GM12878 (cell line): ENCODE measurements at regions of chr14 and their contacts with region 1.

Region 1: GRCh38 chr14:47917345-47917954 is 242.0 kb upstream of the MDGA2 start:
- DNase-seq: no peak
- ATAC-seq: no peak
- H3K4me3 ChIP-seq: no peak overlapping the region
- H3K27ac ChIP-seq: no peak overlapping the region
- H3K4me1 ChIP-seq: no peaks in the 10 kb centered on the region
- H3K27me3 ChIP-seq: no peaks in the 10 kb centered on the region
- CTCF ChIP-seq: peak; percentile 44 to 55 (median 48); a peak in 5 of 6 replicates
- EP300 ChIP-seq: no peak
- POLR2A ChIP-seq: no peak
- RAD21 ChIP-seq: peak; percentile 65

Region 2: GRCh38 chr14:47929334-47929733 is 11.9 kb after region 1 on chr14:
- CTCF ChIA-PET with region 1: interaction called, 26 read pairs
- POLR2A ChIA-PET with region 1: no interaction called
- RAD21 ChIA-PET with region 1: interaction called, 10 read pairs
- SMC1A ChIA-PET with region 1: interaction called, 5 read pairs
- in situ Hi-C with region 1: no loop called
- intact Hi-C with region 1: no loop called
- DNase-seq: peak; percentile 36
- ATAC-seq: peak; percentile 83
- H3K4me3 ChIP-seq: no peak overlapping the region
- H3K27ac ChIP-seq: no peak overlapping the region
- H3K4me1 ChIP-seq: no peaks in the 10 kb centered on the region
- H3K27me3 ChIP-seq: no peaks in the 10 kb centered on the region
- CTCF ChIP-seq: no peak
- EP300 ChIP-seq: peak; percentile 68 to 82; a peak in 3 of 4 replicates
- POLR2A ChIP-seq: no peak
- RAD21 ChIP-seq: no peak

Region 3: DNA sequence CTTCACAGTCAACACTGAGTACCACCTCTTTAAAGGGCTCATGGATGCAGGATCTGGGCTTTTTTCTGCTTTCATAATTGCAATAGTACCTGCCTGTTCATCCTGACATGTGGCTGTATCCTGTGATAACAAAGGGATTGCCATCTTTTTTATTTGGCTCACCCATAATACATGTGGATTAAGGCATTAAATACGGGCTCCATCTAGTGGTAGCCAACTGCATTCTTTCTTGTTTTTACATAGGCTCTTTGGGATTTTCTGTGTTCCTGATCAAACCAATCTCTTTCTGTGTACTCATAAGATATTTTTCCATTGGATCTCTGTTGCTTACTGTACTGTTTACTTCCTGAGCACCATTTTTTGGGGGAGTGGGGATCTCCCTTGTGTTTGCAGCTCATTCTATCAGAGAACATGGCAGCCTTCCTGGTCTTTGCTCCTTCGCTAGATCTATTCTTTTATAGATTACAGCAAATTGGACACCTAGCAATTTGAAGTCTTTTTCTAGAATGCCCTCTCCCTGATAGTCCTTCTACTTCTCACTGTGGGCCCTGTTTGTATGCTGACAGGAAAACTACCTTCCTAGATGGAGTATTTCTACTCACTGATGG is 481.3 kb after region 1 on chr14:
- CTCF ChIA-PET with region 1: interaction called, 15 read pairs
- POLR2A ChIA-PET with region 1: no interaction called
- RAD21 ChIA-PET with region 1: interaction called, 3 read pairs
- SMC1A ChIA-PET with region 1: interaction called, 5 read pairs
- in situ Hi-C with region 1: loop called (anchors 10 kb)
- intact Hi-C with region 1: loop called (anchors 1 kb)
- DNase-seq: no peak
- ATAC-seq: peak; percentile 65
- H3K4me3 ChIP-seq: no peak overlapping the region
- H3K27ac ChIP-seq: no peak overlapping the region
- H3K4me1 ChIP-seq: no peaks in the 10 kb centered on the region
- H3K27me3 ChIP-seq: no peaks in the 10 kb centered on the region
- CTCF ChIP-seq: peak; percentile 63 to 70 (median 64)
- EP300 ChIP-seq: no peak
- POLR2A ChIP-seq: no peak
- RAD21 ChIP-seq: peak; percentile 63

Region 4: GRCh38 chr14:48814562-48814961 is 897.1 kb after region 1 on chr14:
- CTCF ChIA-PET with region 1: no interaction called
- POLR2A ChIA-PET with region 1: no interaction called
- RAD21 ChIA-PET with region 1: no interaction called
- SMC1A ChIA-PET with region 1: no interaction called
- in situ Hi-C with region 1: no loop called
- intact Hi-C with region 1: loop called (anchors 10 kb)
- DNase-seq: no peak
- ATAC-seq: no peak
- H3K4me3 ChIP-seq: no peak overlapping the region
- H3K27ac ChIP-seq: no peak overlapping the region
- H3K4me1 ChIP-seq: no peaks in the 10 kb centered on the region
- H3K27me3 ChIP-seq: no peaks in the 10 kb centered on the region
- CTCF ChIP-seq: no peak
- EP300 ChIP-seq: no peak
- POLR2A ChIP-seq: no peak
- RAD21 ChIP-seq: no peak

Region 5: GRCh38 chr14:49173765-49174373 is 1256.4 kb after region 1 on chr14:
- CTCF ChIA-PET with region 1: interaction called, 9 read pairs
- POLR2A ChIA-PET with region 1: no interaction called
- RAD21 ChIA-PET with region 1: interaction called, 9 read pairs
- SMC1A ChIA-PET with region 1: interaction called, 5 read pairs
- in situ Hi-C with region 1: loop called (anchors 10 kb)
- intact Hi-C with region 1: loop called (anchors 1 kb)
- DNase-seq: peak; percentile 27
- ATAC-seq: peak; percentile 99
- H3K4me3 ChIP-seq: no peak overlapping the region
- H3K27ac ChIP-seq: no peak overlapping the region
- H3K4me1 ChIP-seq: no peaks in the 10 kb centered on the region
- H3K27me3 ChIP-seq: no peaks in the 10 kb centered on the region
- CTCF ChIP-seq: peak; percentile 70 to 74 (median 73); a peak in 5 of 6 replicates
- EP300 ChIP-seq: no peak
- POLR2A ChIP-seq: no peak
- RAD21 ChIP-seq: peak; percentile 87